Transverse colon (tissue), 4 donors: ENCODE measurements at regions of chr9 and their contacts with region 1.

Region 1: DNA sequence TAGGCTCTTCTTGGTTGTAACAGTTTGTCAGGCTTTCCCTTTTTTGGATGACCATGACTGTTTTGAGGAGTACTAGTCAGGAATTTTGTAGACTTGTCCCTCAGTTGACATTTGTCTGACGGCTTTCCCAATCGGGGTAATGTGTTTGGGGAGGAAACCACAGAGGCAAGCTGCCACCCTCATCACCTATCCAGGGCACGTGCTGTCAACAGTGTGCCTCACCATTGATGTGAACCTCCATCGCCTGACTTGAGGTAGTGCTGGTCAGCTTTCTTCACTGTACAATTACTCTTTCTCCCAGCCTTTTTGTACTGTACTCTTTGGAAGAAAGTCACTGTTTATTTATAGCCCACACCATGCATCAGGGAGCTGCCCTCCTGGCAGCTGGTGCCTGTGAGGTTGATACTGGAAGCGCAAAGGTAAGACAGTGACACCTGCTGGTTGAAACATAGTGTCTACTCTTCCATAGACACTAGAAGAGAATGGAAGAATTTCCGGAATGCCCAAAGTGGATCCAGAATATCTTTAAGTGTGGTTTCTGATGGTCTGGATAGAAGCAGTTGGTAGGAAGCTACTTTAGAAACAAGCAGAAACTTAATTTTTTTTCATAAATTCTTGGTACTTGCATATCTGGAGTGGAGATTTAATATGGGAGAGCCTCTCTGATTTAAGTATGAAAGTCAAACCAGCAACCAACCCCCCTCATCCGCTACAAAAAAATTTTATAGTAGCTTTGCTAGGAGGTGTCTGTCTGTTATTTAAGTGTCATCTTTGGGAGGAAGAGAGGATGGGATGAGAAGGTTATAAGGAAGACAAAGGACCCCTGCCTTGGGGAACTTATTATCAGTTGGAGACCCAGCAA is 69.3 kb downstream of the SNX30 start:
- DNase-seq: peak; percentile 22
- H3K4me3 ChIP-seq: no peak overlapping the region
- H3K27ac ChIP-seq: no peak overlapping the region
- H3K4me1 ChIP-seq: peaks cover 2 to 6% (median 4%) of the 10 kb centered on the region in 4 donors
- H3K27me3 ChIP-seq: no peaks in the 10 kb centered on the region
- CTCF ChIP-seq: peak; percentile 62 to 70 (median 66)
- EP300 ChIP-seq: no peak
- POLR2A ChIP-seq: no peak

Region 2: GRCh38 chr9:112097712-112098688 is 721.9 kb before region 1 on chr9:
- in situ Hi-C with region 1: loop called in 1 of 4 experiments (anchors 25 kb)
- intact Hi-C with region 1: no loop called
- DNase-seq: peak; percentile 54
- H3K4me3 ChIP-seq: no peak overlapping the region
- H3K27ac ChIP-seq: no peak overlapping the region
- H3K4me1 ChIP-seq: peaks cover 0 to 6% (median 0%) of the 10 kb centered on the region in 4 donors
- H3K27me3 ChIP-seq: no peaks in the 10 kb centered on the region
- CTCF ChIP-seq: peak; percentile 80 to 95 (median 86)
- EP300 ChIP-seq: no peak
- POLR2A ChIP-seq: no peak